ENCODE measurements at regions of chr3 and their contacts with region 1.

Region 1: DNA sequence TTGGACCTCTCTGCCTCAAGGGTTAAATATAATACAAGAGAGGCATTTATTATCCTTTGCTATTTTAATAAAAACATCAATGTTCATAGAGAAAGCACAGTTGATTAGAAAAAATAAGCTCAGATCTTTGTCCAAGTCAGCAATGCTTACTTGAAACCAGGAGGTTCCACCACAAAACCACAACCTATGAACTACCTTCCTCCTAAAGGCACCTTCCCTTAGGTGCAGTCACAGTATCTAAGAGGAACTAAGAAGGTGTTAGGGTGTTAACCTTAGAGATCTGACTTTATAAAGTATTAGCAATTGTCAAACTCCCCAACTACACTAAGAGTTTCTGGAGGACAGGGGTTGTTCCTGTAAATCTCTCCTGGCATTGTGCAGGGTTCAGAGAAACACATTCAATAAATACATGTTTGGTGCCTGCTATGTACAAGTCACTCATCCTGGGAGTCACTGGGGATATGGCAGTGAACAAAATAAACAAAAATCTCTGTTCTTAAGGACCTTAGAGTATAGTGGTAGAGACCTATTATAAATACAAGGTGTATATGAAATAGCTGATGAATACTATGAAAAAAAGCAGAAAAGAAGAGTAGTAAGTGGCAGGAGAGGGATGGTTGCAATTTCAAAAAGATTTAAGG is 208.6 kb downstream of the NFKBIZ start:
- DNase-seq: peak; percentile 20
- H3K4me3 Mint-ChIP-seq: peak overlapping the region; percentile 1
- H3K27ac Mint-ChIP-seq: peak overlapping the region; percentile 8
- H3K4me1 Mint-ChIP-seq: peaks cover 35% of the 10 kb centered on the region
- H3K27me3 Mint-ChIP-seq: no peaks in the 10 kb centered on the region

Region 2: DNA sequence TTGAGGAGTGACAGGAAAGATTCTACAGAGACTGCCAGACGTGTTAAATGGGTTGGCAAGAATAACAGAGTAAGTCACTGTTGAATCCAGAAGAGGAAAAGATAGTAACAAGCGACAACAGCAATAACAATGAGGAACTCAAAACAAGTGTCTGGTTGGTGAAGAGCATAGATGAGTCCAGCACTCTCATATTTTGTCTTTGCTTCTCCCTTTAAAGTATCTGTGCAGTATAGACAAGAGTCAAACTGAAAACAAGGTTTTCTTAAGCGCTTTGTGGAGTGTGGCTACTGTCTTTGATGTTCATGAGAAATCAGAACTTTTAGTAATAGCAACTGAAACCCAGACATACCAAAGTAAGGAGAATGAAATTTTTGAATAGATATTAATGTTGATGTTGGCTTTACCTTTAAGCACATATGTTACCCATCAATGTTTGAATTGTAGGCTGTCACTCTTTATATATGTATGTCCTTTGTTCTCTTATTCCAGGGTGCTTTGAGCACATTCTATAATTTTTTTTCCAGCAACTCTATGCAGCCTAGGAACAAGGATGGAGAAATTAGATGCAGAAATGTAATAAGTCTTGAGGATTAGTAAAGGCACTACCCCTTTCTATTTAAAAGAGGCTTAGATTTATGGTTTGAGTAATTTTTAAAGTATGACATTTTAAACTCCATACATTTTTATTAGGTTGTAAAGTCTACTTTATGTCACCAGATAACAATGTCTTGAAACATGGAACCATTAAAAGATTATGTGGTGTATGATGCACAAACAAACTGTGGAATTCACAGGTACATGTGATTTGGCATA is 23.1 kb before region 1 on chr3:
- intact Hi-C with region 1: loop called (anchors 1 kb)
- DNase-seq: no peak
- H3K4me3 Mint-ChIP-seq: no peak overlapping the region
- H3K27ac Mint-ChIP-seq: no peak overlapping the region
- H3K4me1 Mint-ChIP-seq: peaks cover 13% of the 10 kb centered on the region
- H3K27me3 Mint-ChIP-seq: peaks cover 4% of the 10 kb centered on the region

Measured in activated T-helper 1 cell treated with anti-CD3 and anti-CD28 coated beads, Interleukin-12 subunit alpha, Interleukin-12 subunit beta, Interleukin-2, Interleukin-4 antibody, amounts not matched to agents 30 ng/mL and 10 ng/mL and 1 ng/mL, durations not matched to agents 14 hours and 24 hours and 36 hours (primary cell).